PC-3 (cell line): ENCODE measurements at regions of chr9 and their contacts with region 1.

Region 1: DNA sequence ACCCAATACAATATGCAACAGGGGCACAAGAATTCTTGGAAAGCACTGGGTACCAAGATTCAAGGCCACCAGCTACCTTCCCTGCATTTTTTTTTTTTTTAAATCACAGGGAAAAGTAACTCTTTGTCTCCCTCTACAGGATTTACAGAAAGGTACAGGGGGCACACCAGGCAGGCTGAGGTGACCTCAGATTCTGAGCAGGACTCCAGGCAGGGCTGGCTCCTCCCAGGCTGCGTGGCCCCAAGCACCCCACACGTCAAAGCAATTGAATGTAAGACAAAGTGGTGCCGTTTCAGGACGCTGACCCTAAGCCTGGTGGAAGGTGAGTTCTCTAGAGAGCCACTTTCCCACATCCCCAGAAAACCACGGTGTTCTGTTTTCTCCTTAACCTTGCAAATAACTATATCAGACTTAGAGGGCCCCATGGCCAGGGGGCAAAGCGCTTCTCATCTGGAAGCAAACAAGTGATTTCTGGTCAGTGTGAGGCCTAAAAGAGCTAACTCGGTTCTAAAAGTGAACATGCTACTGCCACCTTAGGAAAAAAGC is 222.6 kb downstream of the ROR2 start:
- DNase-seq: peak; percentile 61
- ATAC-seq: peak; percentile 75
- H3K4me3 ChIP-seq: no peak overlapping the region
- H3K27ac ChIP-seq: no peak overlapping the region
- H3K4me1 ChIP-seq: no peaks in the 10 kb centered on the region
- H3K27me3 ChIP-seq: no peaks in the 10 kb centered on the region
- CTCF ChIP-seq: peak; percentile 69

Region 2: GRCh38 chr9:91495450-91495849 is 231.9 kb before region 1 on chr9:
- CTCF ChIA-PET with region 1: interaction called, 14 read pairs
- POLR2A ChIA-PET with region 1: no interaction called
- intact Hi-C with region 1: no loop called
- DNase-seq: peak; percentile 64
- ATAC-seq: peak; percentile 48
- H3K4me3 ChIP-seq: no peak overlapping the region
- H3K27ac ChIP-seq: no peak overlapping the region
- H3K4me1 ChIP-seq: peaks cover 17% of the 10 kb centered on the region
- H3K27me3 ChIP-seq: no peaks in the 10 kb centered on the region
- CTCF ChIP-seq: no peak

Region 3: GRCh38 chr9:91659529-91660495 is 67.6 kb before region 1 on chr9:
- CTCF ChIA-PET with region 1: interaction called, 7 read pairs
- POLR2A ChIA-PET with region 1: no interaction called
- intact Hi-C with region 1: loop called (anchors 1 kb)
- DNase-seq: peak; percentile 23
- ATAC-seq: peak; percentile 92
- H3K4me3 ChIP-seq: no peak overlapping the region
- H3K27ac ChIP-seq: no peak overlapping the region
- H3K4me1 ChIP-seq: no peaks in the 10 kb centered on the region
- H3K27me3 ChIP-seq: no peaks in the 10 kb centered on the region
- CTCF ChIP-seq: peak; percentile 58